A549 (cell line): ENCODE measurements at regions of chr17 and their contacts with region 1.

Region 1: DNA sequence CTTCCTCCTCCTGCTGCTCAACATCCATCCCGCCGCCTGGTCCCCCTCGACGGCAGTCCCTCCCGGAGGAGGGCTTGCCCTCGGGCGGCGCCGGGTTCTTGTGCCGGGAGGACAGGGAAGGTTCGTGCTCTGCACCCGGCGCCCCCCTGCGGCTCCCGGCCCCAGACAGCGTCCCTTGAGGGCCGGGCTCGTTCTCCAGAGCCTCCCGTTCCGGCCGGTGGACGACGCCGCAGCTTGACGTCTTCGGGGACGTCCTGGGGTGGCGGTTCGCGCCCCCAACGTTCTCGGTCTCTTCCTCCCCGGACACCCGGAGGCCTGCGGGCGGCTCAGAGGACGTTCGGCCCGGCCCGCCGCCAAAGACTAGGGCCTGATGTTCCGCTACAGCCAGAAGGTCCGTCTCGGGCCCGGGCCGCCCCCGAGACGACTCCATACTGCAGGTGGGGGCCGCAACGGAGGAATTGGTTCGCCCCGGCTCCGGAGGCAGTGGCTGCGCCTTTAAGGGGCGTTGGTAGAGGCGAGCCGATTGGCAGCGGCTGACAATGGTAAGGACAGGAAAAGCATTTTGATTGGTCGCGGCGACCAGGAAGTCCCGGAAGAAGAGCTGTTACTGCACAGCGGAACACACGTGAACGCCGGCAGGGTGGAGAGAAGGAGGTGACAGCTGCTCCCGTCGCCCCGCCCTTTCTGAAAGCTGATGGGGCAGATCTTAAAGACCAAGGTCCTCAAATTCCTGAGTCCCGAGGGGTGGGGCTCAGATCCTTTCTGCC is at the start of gene BORCS6:
- DNase-seq: peak; percentile 97 to 99
- ATAC-seq: peak; percentile 41 to 68
- H3K4me3 ChIP-seq: peak within 1 kb of the TSS; percentile 71
- H3K27ac ChIP-seq: peak within 1 kb of the TSS; percentile 88 to 89
- H3K4me1 ChIP-seq: peaks cover 40% of the 10 kb centered on the region
- CTCF ChIP-seq: peak; percentile 19; the same call in 1 of the 3 replicates
- EP300 ChIP-seq: no peak
- POLR2A ChIP-seq: peak; percentile 65
- RAD21 ChIP-seq: no peak
- polyA plus RNA-seq, gene BORCS6: 3.0 and 3.3 TPM in 2 replicates

Region 2: GRCh38 chr17:8109661-8110464 is 80.0 kb before region 1 on chr17:
- CTCF ChIA-PET with region 1: no interaction called
- POLR2A ChIA-PET with region 1: no interaction called
- DNase-seq: peak; percentile 66 to 75
- ATAC-seq: peak; percentile 79 to 93
- H3K4me3 ChIP-seq: no peak overlapping the region
- H3K27ac ChIP-seq: no peak overlapping the region
- H3K4me1 ChIP-seq: peaks cover 15% of the 10 kb centered on the region
- CTCF ChIP-seq: peak; percentile 88
- EP300 ChIP-seq: no peak
- POLR2A ChIP-seq: no peak
- RAD21 ChIP-seq: peak; percentile 70 to 77

Region 3: GRCh38 chr17:8138672-8139371 is 51.1 kb before region 1 on chr17:
- CTCF ChIA-PET with region 1: interaction called, 30 read pairs
- POLR2A ChIA-PET with region 1: no interaction called
- DNase-seq: peak; percentile 93 to 99
- ATAC-seq: peak; percentile 86 to 94
- H3K4me3 ChIP-seq: peak overlapping the region; percentile 58
- H3K27ac ChIP-seq: peak overlapping the region; percentile 82 to 86
- H3K4me1 ChIP-seq: peaks cover 22% of the 10 kb centered on the region
- CTCF ChIP-seq: peak; percentile 98
- EP300 ChIP-seq: peak in 1 of 2 experiments; percentile 27; a peak in 1 of 5 replicates
- POLR2A ChIP-seq: peak; percentile 47; the same call in 1 of the 2 replicates
- RAD21 ChIP-seq: peak; percentile 90 to 93

Region 4: GRCh38 chr17:8209909-8210760 is 20.2 kb after region 1 on chr17 and contains the start of gene AURKB:
- CTCF ChIA-PET with region 1: interaction called, 164 read pairs
- POLR2A ChIA-PET with region 1: interaction called, 23 read pairs
- DNase-seq: peak; percentile 98
- ATAC-seq: peak; percentile 94 to 99
- H3K4me3 ChIP-seq: peak within 1 kb of the TSS; percentile 64
- H3K27ac ChIP-seq: peak within 1 kb of the TSS; percentile 78 to 89
- H3K4me1 ChIP-seq: peaks cover 19% of the 10 kb centered on the region
- CTCF ChIP-seq: no peak
- EP300 ChIP-seq: no peak
- POLR2A ChIP-seq: peak; percentile 50; the same call in 1 of the 2 replicates
- RAD21 ChIP-seq: no peak
- polyA plus RNA-seq, gene AURKB: 51.0 and 59.5 TPM in 2 replicates

Region 5: DNA sequence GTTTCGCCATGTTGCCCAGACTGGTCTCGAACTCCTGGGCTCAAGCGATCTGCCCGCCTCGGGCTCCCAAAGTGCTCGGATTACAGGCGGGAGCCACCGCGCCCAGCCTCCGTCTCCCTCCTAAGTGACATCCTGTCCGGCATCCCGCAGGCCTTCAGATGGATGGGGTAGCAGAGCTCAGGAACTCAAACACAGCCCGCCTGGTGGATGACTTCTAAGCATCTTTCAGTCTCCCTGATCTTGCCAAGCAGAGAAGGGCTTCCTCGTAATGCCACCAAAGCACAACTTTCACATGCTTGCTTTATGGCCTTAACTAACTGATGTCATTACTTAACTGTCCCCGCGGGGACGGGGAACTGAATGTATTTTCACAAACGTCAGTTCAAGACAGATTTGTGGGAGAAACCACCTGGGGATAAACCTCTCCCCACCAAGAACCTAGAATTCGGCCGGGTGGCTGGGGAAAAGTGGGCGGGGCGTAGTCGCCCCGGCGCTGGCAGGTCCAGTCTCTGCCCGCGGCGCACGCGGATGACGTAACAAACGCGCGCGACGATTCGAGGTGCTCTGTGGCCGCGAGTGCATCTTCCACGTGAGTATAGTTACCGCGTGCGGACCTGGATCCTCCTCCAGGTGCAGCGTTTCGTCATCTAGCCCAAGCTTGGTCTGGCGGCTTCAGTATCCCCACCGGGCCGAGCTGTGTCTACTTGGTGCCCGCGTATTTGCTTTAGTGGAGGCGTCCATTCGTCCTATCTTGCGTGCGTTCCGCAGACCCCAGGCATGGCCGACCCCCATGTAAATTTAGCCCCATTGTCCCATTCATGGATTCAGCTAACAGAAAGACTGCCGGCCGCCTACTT is 59.1 kb after region 1 on chr17 and contains the start of gene PFAS:
- CTCF ChIA-PET with region 1: interaction called, 6 read pairs
- POLR2A ChIA-PET with region 1: interaction called, 13 read pairs
- DNase-seq: peak; percentile 97
- ATAC-seq: peak; percentile 62 to 69
- H3K4me3 ChIP-seq: peak within 1 kb of the TSS; percentile 74
- H3K27ac ChIP-seq: peak within 1 kb of the TSS; percentile 97 to 99
- H3K4me1 ChIP-seq: peaks cover 8% of the 10 kb centered on the region
- CTCF ChIP-seq: no peak
- EP300 ChIP-seq: no peak
- POLR2A ChIP-seq: peak; percentile 91
- RAD21 ChIP-seq: no peak
- polyA plus RNA-seq, gene PFAS: 51.9 and 64.5 TPM in 2 replicates

Region 6: DNA sequence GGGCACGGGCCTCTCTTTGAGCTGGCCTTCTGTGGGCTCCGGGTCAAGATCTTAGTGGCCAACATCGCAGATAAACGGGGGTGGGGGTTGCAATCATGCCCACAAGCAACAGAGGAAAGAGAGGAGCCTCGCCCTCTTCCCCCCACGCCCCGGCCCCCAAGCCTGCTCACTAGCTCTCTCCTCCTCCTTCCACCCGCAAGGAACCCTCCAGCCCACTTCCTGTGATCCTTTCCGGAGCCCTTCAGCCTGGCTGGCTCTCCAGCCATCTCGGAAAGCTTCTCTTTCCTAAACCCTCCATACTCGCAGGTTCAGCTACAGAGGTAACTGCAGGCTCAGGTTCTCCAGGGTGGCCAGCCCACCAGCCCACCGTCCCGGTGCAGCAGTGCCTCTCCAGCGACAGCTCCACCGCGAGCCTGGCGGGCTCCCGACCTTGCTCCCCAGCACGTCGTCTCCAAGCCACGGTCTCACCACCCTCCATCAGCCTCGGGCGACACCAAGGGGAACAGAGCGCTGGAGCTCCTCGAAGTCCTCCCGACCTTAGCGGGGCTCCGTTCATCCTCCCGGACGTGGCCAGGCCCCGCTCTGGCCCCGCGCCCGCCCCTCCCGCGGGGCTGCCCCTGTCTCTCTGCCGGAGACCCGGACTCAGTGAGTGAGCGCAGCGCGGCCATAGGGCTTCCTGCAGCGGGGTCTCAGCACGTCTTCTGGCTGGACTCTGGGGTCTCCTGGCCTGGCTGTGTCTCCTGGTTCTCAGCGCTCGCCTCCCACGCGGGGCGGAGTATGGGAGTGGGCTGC is 136.8 kb after region 1 on chr17:
- CTCF ChIA-PET with region 1: no interaction called
- POLR2A ChIA-PET with region 1: no interaction called
- DNase-seq: no peak
- ATAC-seq: peak; percentile 10 to 54; a peak in 3 of 6 replicates
- H3K4me3 ChIP-seq: no peak overlapping the region
- H3K27ac ChIP-seq: no peak overlapping the region
- H3K4me1 ChIP-seq: no peaks in the 10 kb centered on the region
- CTCF ChIP-seq: no peak
- EP300 ChIP-seq: no peak
- POLR2A ChIP-seq: no peak
- RAD21 ChIP-seq: no peak